Activated B cell treated with CpG ODN at 0.5 μM for 24 hours (primary cell): ENCODE measurements at regions of chr2 and their contacts with region 1.

Region 1: GRCh38 chr2:216666461-216667233 is 28.7 kb downstream of the IGFBP5 start:
- DNase-seq: peak; percentile 58
- ATAC-seq: peak; percentile 91
- H3K4me3 Mint-ChIP-seq: no peak overlapping the region
- H3K27ac Mint-ChIP-seq: no peak overlapping the region
- H3K4me1 Mint-ChIP-seq: no peaks in the 10 kb centered on the region
- H3K27me3 Mint-ChIP-seq: peaks cover 38% of the 10 kb centered on the region
- CTCF ChIP-seq: no peak

Region 2: DNA sequence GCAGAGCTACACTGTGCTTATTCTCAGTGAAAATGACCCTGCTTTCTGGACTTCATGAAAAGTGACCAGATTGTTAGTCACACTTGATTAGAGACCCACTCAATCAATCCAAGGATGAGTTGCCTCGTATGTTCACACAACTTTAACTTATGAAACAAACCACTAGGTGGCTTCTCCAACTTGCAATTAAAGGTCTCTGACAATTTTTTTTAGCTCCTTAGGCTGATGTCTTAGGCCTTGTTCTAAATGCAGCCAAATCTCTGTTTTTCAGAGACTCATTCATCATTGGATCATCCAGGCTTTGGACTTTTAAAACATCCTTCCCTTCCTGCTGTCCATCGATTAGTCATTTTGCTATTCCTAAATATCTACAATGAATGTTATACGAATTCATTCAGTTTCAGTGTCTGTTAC is 716.6 kb before region 1 on chr2:
- CTCF ChIA-PET with region 1: interaction called, 5 read pairs
- POLR2A ChIA-PET with region 1: no interaction called
- intact Hi-C with region 1: loop called (anchors 1 kb)
- DNase-seq: no peak
- ATAC-seq: no peak
- H3K4me3 Mint-ChIP-seq: no peak overlapping the region
- H3K27ac Mint-ChIP-seq: no peak overlapping the region
- H3K4me1 Mint-ChIP-seq: no peaks in the 10 kb centered on the region
- H3K27me3 Mint-ChIP-seq: no peaks in the 10 kb centered on the region
- CTCF ChIP-seq: no peak

Region 3: GRCh38 chr2:216108967-216109921 is 557.4 kb before region 1 on chr2 and contains the start of gene XRCC5:
- CTCF ChIA-PET with region 1: interaction called, 4 read pairs
- POLR2A ChIA-PET with region 1: no interaction called
- intact Hi-C with region 1: loop called (anchors 1 kb)
- DNase-seq: peak; percentile 93
- ATAC-seq: peak; percentile 88
- H3K4me3 Mint-ChIP-seq: peak within 1 kb of the TSS; percentile 99
- H3K27ac Mint-ChIP-seq: peak within 1 kb of the TSS; percentile 99
- H3K4me1 Mint-ChIP-seq: peaks cover 57% of the 10 kb centered on the region
- H3K27me3 Mint-ChIP-seq: no peaks in the 10 kb centered on the region
- CTCF ChIP-seq: no peak
- total RNA-seq, gene XRCC5: 303 and 311 TPM in 2 replicates

Region 4: DNA sequence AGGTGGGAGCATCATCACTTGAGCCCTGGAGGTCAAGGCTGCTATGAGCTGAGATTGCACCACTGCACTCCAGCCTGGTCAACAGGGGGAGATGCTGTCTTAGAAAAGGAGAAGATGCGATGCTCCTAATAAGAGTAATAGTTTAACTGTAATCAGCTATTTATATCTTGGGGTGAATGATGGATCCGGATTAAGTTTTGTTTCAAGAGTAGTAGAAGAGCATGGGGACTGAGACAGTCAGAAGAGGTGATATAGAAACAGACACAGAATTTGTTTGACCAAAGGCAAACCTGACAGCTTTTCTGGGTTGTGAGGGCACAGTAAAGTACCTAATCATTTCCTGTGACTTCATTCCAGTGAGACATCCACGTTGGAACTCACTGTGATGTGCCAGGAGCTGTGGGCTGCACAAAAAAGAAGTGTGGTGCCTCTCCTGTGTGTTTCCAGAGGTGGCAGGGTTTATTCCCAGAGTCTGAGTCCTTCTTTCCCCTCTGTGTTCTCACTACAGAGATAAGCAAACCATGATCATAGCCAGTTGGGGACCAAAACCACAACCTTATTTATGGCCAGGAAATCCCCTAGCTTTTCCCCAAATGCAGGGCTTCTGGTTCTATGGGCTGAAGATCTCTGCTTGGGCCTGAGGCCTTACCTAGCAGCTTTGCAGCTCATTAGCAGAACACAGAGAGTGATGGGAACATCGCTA is 443.8 kb before region 1 on chr2:
- CTCF ChIA-PET with region 1: interaction called, 20 read pairs
- POLR2A ChIA-PET with region 1: interaction called, 3 read pairs
- intact Hi-C with region 1: loop called (anchors 1 kb)
- DNase-seq: peak; percentile 37
- ATAC-seq: peak; percentile 80
- H3K4me3 Mint-ChIP-seq: peak overlapping the region; percentile 64
- H3K27ac Mint-ChIP-seq: peak overlapping the region; percentile 97
- H3K4me1 Mint-ChIP-seq: peaks cover 25% of the 10 kb centered on the region
- H3K27me3 Mint-ChIP-seq: no peaks in the 10 kb centered on the region
- CTCF ChIP-seq: no peak

Region 5: DNA sequence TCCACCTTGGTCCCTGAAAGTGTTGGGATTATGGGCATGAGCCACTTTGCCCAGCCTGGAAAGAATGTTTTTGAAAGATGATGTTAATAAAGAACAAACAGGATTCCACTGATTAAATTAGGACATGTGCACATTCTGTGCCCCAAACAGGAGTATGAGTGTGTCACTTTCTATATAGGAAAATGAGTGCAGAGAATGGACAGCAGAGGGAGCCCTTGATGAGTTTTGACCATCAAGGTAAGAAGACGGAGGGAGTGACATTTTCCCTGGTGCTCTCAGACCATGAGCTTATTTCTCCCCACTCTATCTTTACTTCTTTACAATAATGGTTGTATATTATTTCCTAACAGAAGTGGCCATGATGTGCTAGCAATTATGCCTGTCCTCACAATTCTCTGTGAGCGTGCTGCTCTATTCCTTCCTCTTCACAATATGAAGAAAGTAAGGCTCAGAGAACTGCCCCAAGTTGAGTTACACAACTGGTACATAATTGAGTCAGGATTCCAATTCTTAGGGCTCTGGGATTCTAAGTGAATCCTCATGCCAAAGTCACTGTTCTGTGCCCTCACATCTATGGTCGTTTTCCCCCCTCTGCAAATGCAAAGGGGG is 147.4 kb before region 1 on chr2:
- CTCF ChIA-PET with region 1: interaction called, 23 read pairs
- POLR2A ChIA-PET with region 1: no interaction called
- intact Hi-C with region 1: loop called (anchors 1 kb)
- DNase-seq: no peak
- ATAC-seq: peak; percentile 56
- H3K4me3 Mint-ChIP-seq: no peak overlapping the region
- H3K27ac Mint-ChIP-seq: no peak overlapping the region
- H3K4me1 Mint-ChIP-seq: no peaks in the 10 kb centered on the region
- H3K27me3 Mint-ChIP-seq: no peaks in the 10 kb centered on the region
- CTCF ChIP-seq: no peak